ENCODE measurements at regions of chr6 and their contacts with region 1.

Region 1: GRCh38 chr6:35297601-35298481 is at the start of gene DEF6:
- DNase-seq: peak; percentile 87
- H3K4me3 ChIP-seq: peak within 1 kb of the TSS; percentile 66
- H3K27ac ChIP-seq: no peak within 1 kb of the TSS
- H3K4me1 ChIP-seq: peaks cover 23% of the 10 kb centered on the region
- H3K27me3 ChIP-seq: no peaks in the 10 kb centered on the region
- CTCF ChIP-seq: peak; percentile 85
- total RNA-seq, gene DEF6: 19.6 and 27.0 TPM in 2 replicates

Region 2: DNA sequence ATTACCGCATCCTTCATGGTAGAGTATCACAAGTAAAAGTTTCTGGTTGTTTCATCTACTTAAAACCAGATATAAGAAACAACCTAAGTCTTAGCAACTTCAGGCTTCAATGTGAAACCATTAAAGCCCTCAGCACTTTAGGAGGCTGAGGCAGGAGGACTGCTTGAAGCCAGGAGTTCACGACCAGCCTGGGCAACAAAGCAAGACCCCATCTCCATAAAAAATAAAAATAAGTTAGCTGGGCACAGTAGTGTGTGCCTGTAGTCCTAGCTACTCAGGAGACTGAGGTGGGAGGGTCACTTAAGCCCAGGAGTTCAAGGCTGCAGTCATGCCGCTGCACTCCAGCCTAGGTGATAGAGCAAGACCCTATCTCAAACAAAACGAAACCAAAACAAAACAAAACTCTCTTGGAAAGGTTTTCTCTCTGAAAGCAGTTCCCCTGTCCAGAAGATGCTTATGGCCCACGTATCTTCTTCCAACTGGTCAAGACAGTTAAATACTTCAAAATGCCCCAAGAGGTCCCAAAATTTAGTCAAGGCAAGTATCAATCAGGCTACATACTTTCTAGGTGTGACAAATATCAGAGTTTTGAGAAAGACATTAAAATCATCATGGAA is 419.9 kb before region 1 on chr6:
- CTCF ChIA-PET with region 1: no interaction called
- POLR2A ChIA-PET with region 1: no interaction called
- intact Hi-C with region 1: no loop called
- DNase-seq: no peak
- H3K4me3 ChIP-seq: no peak overlapping the region
- H3K27ac ChIP-seq: no peak overlapping the region
- H3K4me1 ChIP-seq: no peaks in the 10 kb centered on the region
- H3K27me3 ChIP-seq: no peaks in the 10 kb centered on the region
- CTCF ChIP-seq: no peak

Region 3: DNA sequence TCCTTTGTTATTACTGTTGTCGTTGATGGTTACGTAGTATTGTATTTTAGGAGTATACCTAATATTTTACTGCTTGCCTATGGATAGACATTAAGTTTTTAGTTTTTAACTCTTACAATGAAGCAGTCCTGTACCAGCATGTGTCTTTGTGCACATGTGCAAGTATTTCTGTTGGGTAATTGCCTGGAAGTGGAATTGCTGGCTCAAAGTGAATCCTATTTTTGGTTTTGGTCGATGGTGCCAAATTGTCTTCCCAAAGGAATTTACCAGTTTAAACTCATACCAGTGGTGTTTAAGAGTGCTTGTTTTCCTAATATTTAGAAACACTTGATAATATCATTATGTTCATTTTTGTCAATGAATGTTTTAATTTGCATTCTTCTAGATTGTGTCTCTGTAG is 333.3 kb before region 1 on chr6:
- CTCF ChIA-PET with region 1: no interaction called
- POLR2A ChIA-PET with region 1: no interaction called
- intact Hi-C with region 1: no loop called
- DNase-seq: no peak
- H3K4me3 ChIP-seq: no peak overlapping the region
- H3K27ac ChIP-seq: no peak overlapping the region
- H3K4me1 ChIP-seq: no peaks in the 10 kb centered on the region
- H3K27me3 ChIP-seq: no peaks in the 10 kb centered on the region
- CTCF ChIP-seq: no peak

Region 4: DNA sequence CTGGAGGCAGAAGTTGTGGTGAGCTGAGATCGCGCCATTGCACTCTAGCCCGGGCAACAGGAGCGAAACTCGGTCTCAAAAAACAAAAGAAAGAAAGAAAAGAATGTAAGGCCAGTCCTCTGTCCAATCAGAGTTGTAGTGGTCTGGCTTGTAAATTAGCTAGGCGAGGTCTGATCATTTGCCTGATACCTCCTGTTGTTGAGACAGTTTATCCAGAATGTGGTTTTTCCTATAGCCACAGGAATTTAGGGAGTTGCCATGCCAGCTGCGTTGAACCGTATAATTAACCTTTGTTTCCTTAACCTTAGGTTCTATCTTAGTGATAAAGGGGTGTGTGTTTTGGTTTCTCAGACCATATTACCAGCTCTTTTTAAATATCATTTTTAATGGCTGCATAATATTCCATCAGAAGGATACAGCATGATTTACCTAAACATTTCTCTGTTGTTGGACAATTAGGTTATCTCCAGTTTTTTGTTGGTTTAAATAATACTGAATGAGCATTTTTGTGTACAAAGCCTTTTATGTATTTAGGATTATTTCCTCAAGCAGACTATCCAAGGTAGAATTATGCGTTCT is 32.8 kb after region 1 on chr6:
- CTCF ChIA-PET with region 1: no interaction called
- POLR2A ChIA-PET with region 1: no interaction called
- intact Hi-C with region 1: no loop called
- DNase-seq: peak in 1 of 2 experiments; percentile 47
- H3K4me3 ChIP-seq: no peak overlapping the region
- H3K27ac ChIP-seq: no peak overlapping the region
- H3K4me1 ChIP-seq: 0 out of 2 replicates have a peak, but pooled peaks cover 3% of the 10 kb centered on the region
- H3K27me3 ChIP-seq: peaks cover 4% of the 10 kb centered on the region; the same call in 1 of the 2 replicates
- CTCF ChIP-seq: no peak

Region 5: GRCh38 chr6:35452186-35453090 is 154.6 kb after region 1 on chr6 and contains the start of gene FANCE:
- CTCF ChIA-PET with region 1: interaction called, 6 read pairs
- POLR2A ChIA-PET with region 1: no interaction called
- intact Hi-C with region 1: loop called (anchors 1 kb)
- DNase-seq: peak; percentile 76 to 97
- H3K4me3 ChIP-seq: peak within 1 kb of the TSS; percentile 65
- H3K27ac ChIP-seq: no peak within 1 kb of the TSS
- H3K4me1 ChIP-seq: peaks cover 21% of the 10 kb centered on the region
- H3K27me3 ChIP-seq: no peaks in the 10 kb centered on the region
- CTCF ChIP-seq: no peak
- total RNA-seq, gene FANCE: 6.9 and 9.6 TPM in 2 replicates

Region 6: DNA sequence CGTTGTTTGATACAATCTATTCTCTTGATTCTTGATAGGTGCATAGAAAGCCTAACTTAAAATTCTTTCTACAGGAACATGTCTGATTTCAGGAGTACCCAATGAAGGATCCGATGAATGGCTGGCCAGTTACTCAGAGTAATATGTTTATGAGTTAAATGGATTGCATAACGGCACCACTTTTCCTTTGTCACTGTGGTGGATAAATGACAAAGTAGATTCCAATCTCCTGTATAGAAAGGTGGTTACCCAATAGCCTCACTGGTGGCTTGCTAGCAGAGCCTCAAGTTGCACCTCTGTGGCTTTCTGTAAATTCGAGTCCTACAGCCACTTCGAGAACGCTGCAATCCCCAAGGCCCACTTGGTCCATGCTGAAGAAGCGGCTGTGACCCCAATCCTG is 535.7 kb after region 1 on chr6:
- CTCF ChIA-PET with region 1: no interaction called
- POLR2A ChIA-PET with region 1: no interaction called
- intact Hi-C with region 1: no loop called
- DNase-seq: peak; percentile 49 to 92
- H3K4me3 ChIP-seq: no peak overlapping the region
- H3K27ac ChIP-seq: peak overlapping the region; percentile 88
- H3K4me1 ChIP-seq: peaks cover 35% of the 10 kb centered on the region
- H3K27me3 ChIP-seq: no peaks in the 10 kb centered on the region
- CTCF ChIP-seq: no peak

Measured in PC-9 (cell line).